ENCODE measurements at regions of chr12 and their contacts with region 1.

Region 1: GRCh38 chr12:56315622-56316473 is at the start of gene CNPY2:
- H3K4me3 Mint-ChIP-seq: peak within 1 kb of the TSS; percentile 99
- H3K27ac Mint-ChIP-seq: peak within 1 kb of the TSS; percentile 100
- H3K4me1 Mint-ChIP-seq: peaks cover 16% of the 10 kb centered on the region
- H3K27me3 Mint-ChIP-seq: no peaks in the 10 kb centered on the region

Region 2: GRCh38 chr12:55874443-55874842 is 441.4 kb before region 1 on chr12:
- intact Hi-C with region 1: no loop called
- H3K4me3 Mint-ChIP-seq: no peak overlapping the region
- H3K27ac Mint-ChIP-seq: no peak overlapping the region
- H3K4me1 Mint-ChIP-seq: no peaks in the 10 kb centered on the region
- H3K27me3 Mint-ChIP-seq: no peaks in the 10 kb centered on the region

Region 3: GRCh38 chr12:56221527-56222387 is 94.1 kb before region 1 on chr12 and contains the start of gene RNF41:
- intact Hi-C with region 1: no loop called
- H3K4me3 Mint-ChIP-seq: peak within 1 kb of the TSS; percentile 99
- H3K27ac Mint-ChIP-seq: peak within 1 kb of the TSS; percentile 100
- H3K4me1 Mint-ChIP-seq: peaks cover 58% of the 10 kb centered on the region
- H3K27me3 Mint-ChIP-seq: no peaks in the 10 kb centered on the region

Region 4: DNA sequence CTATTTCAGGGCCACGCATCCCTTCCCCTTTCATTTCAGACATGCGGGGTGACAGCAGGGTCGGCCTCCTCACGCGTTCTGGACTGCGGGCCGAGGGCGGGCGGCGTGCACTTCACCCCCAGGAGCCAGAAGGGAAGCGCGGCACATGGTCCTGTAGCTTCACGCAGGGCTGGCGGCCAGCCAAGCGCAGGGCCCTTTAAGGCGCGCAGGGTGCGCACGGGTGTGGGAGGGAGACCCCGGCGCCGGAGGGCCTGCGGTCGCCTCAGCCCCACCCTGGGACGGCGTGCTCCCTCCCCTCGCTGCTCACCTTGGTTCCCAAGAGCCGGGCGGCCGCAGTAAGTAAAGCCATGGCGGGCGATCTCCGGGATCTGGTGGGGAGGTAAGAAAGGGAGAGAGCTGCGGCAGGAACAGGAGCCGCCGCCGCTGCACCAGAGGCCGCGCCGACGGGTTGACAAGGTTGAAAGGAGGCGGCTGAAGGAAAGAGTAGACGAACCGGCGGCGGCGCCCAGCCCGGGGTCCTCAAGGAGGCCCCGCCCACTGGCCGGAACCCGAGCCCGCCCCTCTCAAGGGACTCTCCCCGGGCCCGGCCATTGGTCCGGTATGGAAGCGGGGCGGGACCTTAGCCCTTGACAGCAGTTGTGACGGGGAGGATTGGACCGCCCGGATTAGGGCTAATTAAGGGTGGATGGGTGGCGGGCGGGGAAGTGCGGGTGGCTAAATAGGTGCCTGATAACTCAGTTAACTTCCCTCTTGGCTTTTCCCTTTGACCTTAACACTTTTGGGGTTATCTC is 15.8 kb before region 1 on chr12 and contains the start of gene CS:
- intact Hi-C with region 1: loop called (anchors 1 kb)
- H3K4me3 Mint-ChIP-seq: peak within 1 kb of the TSS; percentile 95
- H3K27ac Mint-ChIP-seq: peak within 1 kb of the TSS; percentile 99
- H3K4me1 Mint-ChIP-seq: peaks cover 54% of the 10 kb centered on the region
- H3K27me3 Mint-ChIP-seq: no peaks in the 10 kb centered on the region

Region 5: GRCh38 chr12:56333679-56334489 is 18.0 kb after region 1 on chr12 and contains the start of gene PAN2:
- intact Hi-C with region 1: loop called (anchors 1 kb)
- H3K4me3 Mint-ChIP-seq: peak within 1 kb of the TSS; percentile 88
- H3K27ac Mint-ChIP-seq: peak within 1 kb of the TSS; percentile 100
- H3K4me1 Mint-ChIP-seq: peaks cover 60% of the 10 kb centered on the region
- H3K27me3 Mint-ChIP-seq: no peaks in the 10 kb centered on the region

Region 6: DNA sequence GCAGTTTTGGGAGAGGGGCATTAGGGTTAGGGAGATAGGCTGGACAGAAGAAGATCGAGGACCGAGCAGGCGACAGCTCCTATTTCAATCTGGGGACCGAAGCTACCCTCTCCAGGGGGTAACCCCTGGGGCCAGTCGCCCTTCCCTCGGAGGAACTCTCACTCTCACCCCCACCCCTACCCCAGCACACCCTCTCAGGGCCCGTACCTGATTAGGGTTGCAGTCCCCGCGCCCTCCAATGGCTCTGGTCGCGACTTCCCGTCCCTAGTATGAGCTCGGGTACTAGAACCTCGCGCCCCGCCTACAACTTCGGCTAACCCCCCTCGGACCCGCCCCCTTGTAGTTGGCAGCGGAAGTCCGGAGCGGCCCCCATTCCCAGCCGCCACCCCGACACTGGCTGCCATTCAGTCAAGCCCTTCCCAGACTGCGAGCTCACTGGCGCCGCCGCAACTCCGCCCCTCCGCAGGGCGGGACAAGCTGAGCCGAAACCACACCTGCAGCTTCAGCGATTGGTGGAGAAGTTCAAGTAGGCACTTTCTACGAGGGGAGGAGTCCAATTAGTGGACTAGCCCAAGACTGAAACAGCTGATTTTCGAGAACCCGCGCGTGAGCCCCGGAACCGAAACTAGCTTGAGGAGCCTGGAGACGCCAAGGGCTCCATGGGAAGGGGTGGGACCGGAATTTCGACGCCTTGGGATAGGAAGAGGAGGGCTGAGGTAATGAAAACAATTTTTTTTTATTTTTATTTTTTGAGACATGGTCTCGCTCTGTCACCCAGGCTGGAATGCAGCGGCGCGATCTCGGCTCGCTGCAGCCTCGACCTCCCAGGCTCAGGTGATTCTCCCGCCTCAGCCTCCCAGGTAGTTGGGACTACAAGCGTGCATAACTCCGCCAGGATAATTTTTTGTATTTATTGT is 44.3 kb after region 1 on chr12 and contains the start of gene STAT2:
- intact Hi-C with region 1: loop called (anchors 1 kb)
- H3K4me3 Mint-ChIP-seq: peak within 1 kb of the TSS; percentile 86
- H3K27ac Mint-ChIP-seq: peak within 1 kb of the TSS; percentile 91
- H3K4me1 Mint-ChIP-seq: peaks cover 15% of the 10 kb centered on the region
- H3K27me3 Mint-ChIP-seq: no peaks in the 10 kb centered on the region

Region 7: GRCh38 chr12:56448860-56449621 is 133.2 kb after region 1 on chr12 and contains the start of gene TIMELESS:
- intact Hi-C with region 1: loop called (anchors 1 kb)
- H3K4me3 Mint-ChIP-seq: peak within 1 kb of the TSS; percentile 92
- H3K27ac Mint-ChIP-seq: peak within 1 kb of the TSS; percentile 89
- H3K4me1 Mint-ChIP-seq: peaks cover 29% of the 10 kb centered on the region
- H3K27me3 Mint-ChIP-seq: no peaks in the 10 kb centered on the region

Region 8: GRCh38 chr12:56468216-56469006 is 152.6 kb after region 1 on chr12 and contains the start of gene SPRYD4:
- intact Hi-C with region 1: loop called (anchors 1 kb)
- H3K4me3 Mint-ChIP-seq: peak within 1 kb of the TSS; percentile 94
- H3K27ac Mint-ChIP-seq: peak within 1 kb of the TSS; percentile 98
- H3K4me1 Mint-ChIP-seq: peaks cover 33% of the 10 kb centered on the region
- H3K27me3 Mint-ChIP-seq: no peaks in the 10 kb centered on the region